ENCODE measurements at regions of chr2 and their contacts with region 1.

Region 1: GRCh38 chr2:74529357-74530238 is at the starts of genes AUP1 and HTRA2:
- DNase-seq: peak; percentile 95
- ATAC-seq: peak; percentile 87
- H3K4me3 ChIP-seq: peak within 1 kb of the TSS; percentile 62 to 98 (median 70)
- H3K4me3 Mint-ChIP-seq: peak within 1 kb of the TSS; percentile 97
- H3K27ac ChIP-seq: peak within 1 kb of the TSS; percentile 84 to 90
- H3K27ac Mint-ChIP-seq: peak within 1 kb of the TSS; percentile 96
- H3K4me1 ChIP-seq: peaks cover 39 to 49% of the 10 kb centered on the region in 2 donors
- H3K4me1 Mint-ChIP-seq: peaks cover 43% of the 10 kb centered on the region
- H3K27me3 ChIP-seq: no peaks in the 10 kb centered on the region
- H3K27me3 Mint-ChIP-seq: no peaks in the 10 kb centered on the region
- CTCF ChIP-seq: no peak
- total RNA-seq, gene AUP1: 190 and 201 TPM in 2 replicates
- total RNA-seq, gene HTRA2: 52.2 and 52.8 TPM in 2 replicates

Region 2: DNA sequence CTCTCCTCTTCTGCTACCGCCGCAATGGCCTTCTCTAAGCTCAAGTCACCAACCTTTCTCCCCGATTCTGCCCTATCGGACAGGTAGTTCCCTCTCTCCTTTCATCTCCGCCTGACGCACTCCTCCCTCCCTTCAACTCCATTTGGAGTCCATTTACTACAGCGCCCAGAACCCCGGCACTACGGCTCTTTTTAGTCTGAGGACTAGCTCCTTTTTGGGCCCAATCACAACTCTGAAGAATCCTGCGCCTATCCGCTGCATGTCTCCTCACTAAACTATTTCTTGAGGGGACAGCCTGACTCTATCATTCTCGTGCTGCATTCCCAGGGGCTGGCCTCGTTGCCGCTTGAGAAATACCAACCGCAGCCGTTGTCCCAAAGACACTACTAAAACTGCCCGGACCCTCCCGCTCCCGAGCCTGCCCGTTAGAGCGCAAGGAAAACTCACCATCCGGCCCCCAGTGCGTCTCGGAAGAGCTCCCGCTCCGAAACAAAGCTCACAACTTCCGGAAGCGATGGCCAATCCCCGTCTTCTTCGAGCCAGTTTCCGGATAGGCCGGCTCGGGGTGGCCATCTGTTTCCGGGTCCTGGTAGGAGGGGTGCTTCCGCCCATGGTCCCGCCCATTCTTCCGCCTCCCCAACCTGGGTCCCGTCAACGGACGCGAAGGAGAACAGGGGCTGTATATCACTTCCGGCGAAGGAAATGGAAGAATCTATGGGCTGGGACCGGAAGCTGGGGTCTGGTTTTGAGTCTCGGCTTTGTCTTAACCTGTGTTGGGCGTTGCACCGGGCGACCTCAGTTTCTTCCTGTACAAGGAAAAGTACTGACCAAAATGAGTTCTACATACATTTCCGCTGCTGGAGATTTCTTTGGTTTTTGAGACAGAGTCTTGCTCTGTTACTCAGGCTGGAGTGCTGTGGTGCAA is 792.5 kb before region 1 on chr2 and contains the start of gene TPRKB:
- CTCF ChIA-PET with region 1: no interaction called
- POLR2A ChIA-PET with region 1: no interaction called
- intact Hi-C with region 1: loop called (anchors 5 kb)
- DNase-seq: peak; percentile 95
- ATAC-seq: peak; percentile 99
- H3K4me3 ChIP-seq: peak within 1 kb of the TSS; percentile 68 to 97 (median 88)
- H3K4me3 Mint-ChIP-seq: peak within 1 kb of the TSS; percentile 91
- H3K27ac ChIP-seq: peak within 1 kb of the TSS; percentile 59 to 78
- H3K27ac Mint-ChIP-seq: peak within 1 kb of the TSS; percentile 83
- H3K4me1 ChIP-seq: peaks cover 8 to 15% of the 10 kb centered on the region in 2 donors
- H3K4me1 Mint-ChIP-seq: peaks cover 16% of the 10 kb centered on the region
- H3K27me3 ChIP-seq: no peaks in the 10 kb centered on the region
- H3K27me3 Mint-ChIP-seq: no peaks in the 10 kb centered on the region
- CTCF ChIP-seq: no peak
- total RNA-seq, gene TPRKB: 24.3 and 31.2 TPM in 2 replicates

Region 3: DNA sequence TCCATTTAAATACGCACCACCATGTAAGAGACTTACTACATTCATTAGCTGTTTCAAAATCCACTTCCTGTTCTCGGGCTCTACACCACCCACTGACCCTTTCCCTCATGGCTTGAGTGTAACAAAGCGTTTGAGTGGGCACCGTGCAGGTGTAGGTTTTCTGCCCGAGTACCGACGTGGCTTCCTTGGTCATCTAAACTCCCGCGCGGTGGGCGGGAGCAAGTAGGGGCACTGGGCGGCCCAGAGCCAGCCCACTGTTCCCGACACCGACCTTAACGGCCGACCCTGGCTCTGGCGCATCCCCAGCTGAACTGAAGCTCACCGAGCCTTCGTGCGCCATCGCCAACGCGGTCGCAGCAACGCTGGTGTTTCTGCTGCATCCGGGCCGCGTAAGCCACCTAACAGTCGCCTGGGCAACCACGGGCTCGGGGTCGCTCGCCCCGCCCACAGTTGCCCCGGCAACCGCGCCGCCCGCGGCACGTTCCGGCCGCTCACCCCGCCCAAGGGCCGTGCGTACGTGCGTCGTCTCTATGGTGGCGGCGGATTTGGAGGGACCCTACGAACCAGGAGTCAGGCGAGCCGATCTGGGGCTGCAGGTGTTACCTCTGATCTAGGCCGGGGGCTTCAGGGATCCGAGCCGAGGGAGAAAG is 108.3 kb before region 1 on chr2 and contains the starts of genes C2orf81 and WDR54:
- CTCF ChIA-PET with region 1: no interaction called
- POLR2A ChIA-PET with region 1: no interaction called
- intact Hi-C with region 1: loop called (anchors 1 kb)
- DNase-seq: peak; percentile 97
- ATAC-seq: peak; percentile 90
- H3K4me3 ChIP-seq: peak within 1 kb of the TSS; percentile 61 to 98 (median 90)
- H3K4me3 Mint-ChIP-seq: peak within 1 kb of the TSS; percentile 98
- H3K27ac ChIP-seq: peak within 1 kb of the TSS; percentile 94
- H3K27ac Mint-ChIP-seq: peak within 1 kb of the TSS; percentile 99
- H3K4me1 ChIP-seq: peaks cover 29 to 41% of the 10 kb centered on the region in 2 donors
- H3K4me1 Mint-ChIP-seq: peaks cover 43% of the 10 kb centered on the region
- H3K27me3 ChIP-seq: no peaks in the 10 kb centered on the region
- H3K27me3 Mint-ChIP-seq: no peaks in the 10 kb centered on the region
- CTCF ChIP-seq: no peak
- total RNA-seq, gene C2orf81: 8.6 and 9.1 TPM in 2 replicates
- total RNA-seq, gene WDR54: 39.0 and 42.2 TPM in 2 replicates

Region 4: GRCh38 chr2:74472086-74472944 is 57.3 kb before region 1 on chr2 and contains the start of gene MRPL53:
- CTCF ChIA-PET with region 1: no interaction called
- POLR2A ChIA-PET with region 1: interaction called, 6 read pairs
- intact Hi-C with region 1: loop called (anchors 1 kb)
- DNase-seq: peak; percentile 97
- ATAC-seq: peak; percentile 93
- H3K4me3 ChIP-seq: peak within 1 kb of the TSS; percentile 65 to 89 (median 67)
- H3K4me3 Mint-ChIP-seq: peak within 1 kb of the TSS; percentile 99
- H3K27ac ChIP-seq: peak within 1 kb of the TSS; percentile 69 to 94
- H3K27ac Mint-ChIP-seq: peak within 1 kb of the TSS; percentile 99
- H3K4me1 ChIP-seq: peaks cover 16 to 22% of the 10 kb centered on the region in 2 donors
- H3K4me1 Mint-ChIP-seq: peaks cover 20% of the 10 kb centered on the region
- H3K27me3 ChIP-seq: no peaks in the 10 kb centered on the region
- H3K27me3 Mint-ChIP-seq: no peaks in the 10 kb centered on the region
- CTCF ChIP-seq: no peak
- total RNA-seq, gene MRPL53: 61.5 and 70.0 TPM in 2 replicates

Region 5: DNA sequence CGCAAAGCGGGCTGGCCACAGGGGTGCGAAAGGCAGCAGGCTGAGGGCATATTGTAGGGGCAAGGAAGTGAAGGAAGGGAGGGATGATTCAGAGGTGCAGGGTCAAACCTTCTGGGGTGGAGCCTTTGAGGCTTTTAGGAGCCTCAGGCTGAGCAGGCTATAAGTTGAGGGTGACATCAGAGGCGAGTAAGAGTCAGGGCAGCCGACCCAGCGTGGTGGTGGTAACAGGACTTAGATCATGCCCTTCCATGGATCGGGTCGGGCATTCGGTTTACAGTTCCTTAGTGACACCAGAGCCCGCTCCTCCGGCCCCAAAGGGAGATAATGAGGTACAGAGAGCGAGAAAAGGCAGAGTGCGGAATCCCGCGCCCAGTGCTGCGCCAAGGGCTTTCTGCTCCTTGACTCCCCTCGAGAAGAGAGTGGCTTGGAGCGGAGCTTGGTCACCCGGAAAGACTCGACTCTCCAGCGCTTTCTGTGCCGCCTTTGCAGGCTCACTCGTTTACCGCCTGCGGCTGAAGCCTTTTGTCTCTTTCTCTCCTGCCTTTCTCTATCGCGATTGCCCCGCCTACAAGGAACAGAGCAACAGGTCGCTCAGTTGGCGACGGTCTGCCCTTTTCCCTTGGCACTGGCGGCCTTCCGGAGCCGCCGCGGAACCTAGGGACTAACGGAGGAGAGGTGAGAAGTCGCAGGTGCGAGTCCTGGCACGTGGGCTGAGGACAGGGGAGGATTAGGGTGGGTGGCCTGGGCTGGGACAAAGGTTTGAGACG is 30.9 kb before region 1 on chr2:
- CTCF ChIA-PET with region 1: interaction called, 7 read pairs
- POLR2A ChIA-PET with region 1: interaction called, 3 read pairs
- intact Hi-C with region 1: loop called (anchors 5 kb)
- DNase-seq: peak; percentile 60
- ATAC-seq: no peak
- H3K4me3 ChIP-seq: peak overlapping the region; percentile 26 to 69 (median 38)
- H3K4me3 Mint-ChIP-seq: peak overlapping the region; percentile 92
- H3K27ac ChIP-seq: no peak overlapping the region
- H3K27ac Mint-ChIP-seq: peak overlapping the region; percentile 64
- H3K4me1 ChIP-seq: peaks cover 46 to 49% of the 10 kb centered on the region in 2 donors
- H3K4me1 Mint-ChIP-seq: peaks cover 45% of the 10 kb centered on the region
- H3K27me3 ChIP-seq: peaks cover 0 to 67% (median 36%) of the 10 kb centered on the region in 4 experiments
- H3K27me3 Mint-ChIP-seq: peaks cover 50% of the 10 kb centered on the region
- CTCF ChIP-seq: no peak

Region 6: DNA sequence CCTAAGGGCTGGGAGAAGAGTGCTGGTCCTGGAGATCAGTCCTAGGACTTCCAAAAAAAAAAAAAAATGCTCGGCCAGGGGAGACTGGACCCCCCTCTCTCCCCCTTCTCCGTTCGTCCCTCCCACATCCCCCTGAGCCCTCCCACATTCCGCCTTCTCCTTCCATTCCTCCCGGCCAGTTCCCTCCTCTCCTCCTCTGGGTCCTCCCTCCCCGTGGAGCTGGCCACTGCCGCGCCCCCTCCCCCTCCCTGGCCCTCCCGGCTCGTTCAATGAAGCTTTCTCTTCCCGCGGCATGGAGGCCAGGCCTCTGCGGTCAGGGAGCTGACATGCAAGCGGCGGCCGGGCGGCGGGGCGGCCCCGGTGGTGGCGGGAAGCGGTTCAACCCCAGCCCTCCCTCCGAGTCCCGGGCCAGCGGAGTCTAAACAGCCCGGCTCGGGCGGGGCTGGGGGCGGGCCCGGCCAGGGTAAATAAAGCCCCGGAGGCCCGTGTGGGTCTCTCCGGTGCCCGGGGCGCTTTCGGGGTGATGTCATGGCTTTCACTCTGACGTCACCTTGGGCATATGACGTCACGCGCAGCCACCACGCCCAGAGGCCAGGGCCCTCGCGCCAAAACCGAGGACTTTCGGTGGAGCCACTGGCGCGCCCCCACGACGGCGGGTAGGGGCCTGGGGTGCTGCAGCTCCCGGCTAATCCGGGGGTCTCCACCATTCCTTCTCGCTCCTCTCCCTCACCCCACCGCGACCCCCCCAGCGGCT is 24.5 kb after region 1 on chr2 and contains the start of gene LOXL3:
- CTCF ChIA-PET with region 1: interaction called, 8 read pairs
- POLR2A ChIA-PET with region 1: interaction called, 5 read pairs
- intact Hi-C with region 1: loop called (anchors 1 kb)
- DNase-seq: peak; percentile 93
- ATAC-seq: peak; percentile 48
- H3K4me3 ChIP-seq: peak within 1 kb of the TSS; percentile 51 to 99 (median 84)
- H3K4me3 Mint-ChIP-seq: peak within 1 kb of the TSS; percentile 96
- H3K27ac ChIP-seq: peak within 1 kb of the TSS; percentile 64 to 76
- H3K27ac Mint-ChIP-seq: peak within 1 kb of the TSS; percentile 94
- H3K4me1 ChIP-seq: peaks cover 16 to 39% of the 10 kb centered on the region in 2 donors
- H3K4me1 Mint-ChIP-seq: peaks cover 24% of the 10 kb centered on the region
- H3K27me3 ChIP-seq: peaks cover 0 to 15% (median 8%) of the 10 kb centered on the region in 4 experiments
- H3K27me3 Mint-ChIP-seq: no peaks in the 10 kb centered on the region
- CTCF ChIP-seq: no peak
- total RNA-seq, gene LOXL3: 0.66 and 1.2 TPM in 2 replicates